ENCODE measurements at regions of chr10 and their contacts with region 1.

Region 1: DNA sequence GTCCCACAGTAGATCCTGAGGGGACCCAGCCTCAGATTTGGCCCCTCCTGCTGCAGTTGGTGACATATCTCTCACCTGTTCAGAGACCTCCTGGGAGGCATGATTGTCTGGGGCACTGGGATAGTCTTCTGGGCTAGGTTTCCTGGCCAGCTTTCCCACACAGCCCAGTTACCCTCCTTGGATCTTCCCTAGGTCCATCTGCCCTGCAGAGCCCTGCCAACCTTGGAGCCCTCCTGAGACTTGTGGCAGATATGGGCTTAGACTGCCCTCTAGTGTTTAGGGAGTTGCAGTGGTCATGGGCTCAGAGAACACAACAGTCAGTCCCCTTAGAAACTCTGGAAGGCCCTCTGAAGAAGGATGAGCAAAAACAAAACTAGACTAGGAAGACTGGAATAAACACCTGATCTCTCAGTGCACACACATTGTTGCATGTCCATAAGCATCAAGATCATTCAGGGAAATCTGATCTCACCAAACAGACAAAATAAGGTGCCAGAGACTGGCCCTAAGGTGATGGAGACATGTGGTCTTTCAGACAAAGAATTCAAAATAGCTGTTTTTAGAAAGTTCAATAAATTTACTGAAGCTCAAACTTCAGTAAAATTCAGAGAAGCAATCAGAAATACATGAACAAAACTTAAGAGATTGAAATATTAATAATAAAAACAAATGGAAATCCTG is 324.6 kb downstream of the ATRNL1 start:
- H3K4me3 Mint-ChIP-seq: no peak overlapping the region
- H3K27ac Mint-ChIP-seq: no peak overlapping the region
- H3K4me1 Mint-ChIP-seq: no peaks in the 10 kb centered on the region
- H3K27me3 Mint-ChIP-seq: no peaks in the 10 kb centered on the region

Region 2: DNA sequence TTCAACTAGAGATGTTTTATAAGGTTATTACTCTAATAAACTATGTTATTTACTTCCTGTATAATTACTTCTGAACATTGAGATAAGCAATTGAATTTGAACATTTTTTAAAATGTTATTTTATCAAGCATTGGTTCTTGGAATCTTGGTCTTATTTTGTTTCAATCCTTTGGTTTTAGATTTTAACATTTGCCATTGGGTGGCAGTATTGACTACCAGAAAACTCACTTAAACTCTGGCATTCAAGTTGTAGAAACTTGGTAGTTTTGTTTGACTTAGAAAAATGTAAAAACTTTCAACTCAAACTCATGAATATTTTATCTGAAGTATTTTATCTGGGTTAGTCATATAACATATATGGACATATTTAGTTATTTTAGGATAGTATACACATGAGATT is 276.5 kb before region 1 on chr10:
- intact Hi-C with region 1: loop called (anchors 5 kb)
- H3K4me3 Mint-ChIP-seq: no peak overlapping the region
- H3K27ac Mint-ChIP-seq: no peak overlapping the region
- H3K4me1 Mint-ChIP-seq: no peaks in the 10 kb centered on the region
- H3K27me3 Mint-ChIP-seq: peaks cover 3% of the 10 kb centered on the region

Region 3: GRCh38 chr10:115171392-115171960 is 246.2 kb before region 1 on chr10:
- intact Hi-C with region 1: loop called (anchors 10 kb)
- H3K4me3 Mint-ChIP-seq: no peak overlapping the region
- H3K27ac Mint-ChIP-seq: no peak overlapping the region
- H3K4me1 Mint-ChIP-seq: peaks cover 18% of the 10 kb centered on the region
- H3K27me3 Mint-ChIP-seq: peaks cover 4% of the 10 kb centered on the region

Measured in dendritic cell treated with granulocyte-macrophage colony-stimulating factor and Interleukin-4, amounts not matched to agents 40 ng/mL and 50 ng/mL, for 4 days (primary cell).